Right lobe of liver (tissue), 6 donors: ENCODE measurements at regions of chr2 and their contacts with region 1.

Region 1: GRCh38 chr2:133171393-133172004 is 396.8 kb downstream of the NCKAP5 start:
- DNase-seq: no peak
- ATAC-seq: peak; percentile 78 to 91 (median 89)
- H3K4me3 ChIP-seq: no peak overlapping the region
- H3K27ac ChIP-seq: no peak overlapping the region
- H3K4me1 ChIP-seq: peaks cover 0 to 9% (median 0%) of the 10 kb centered on the region in 4 donors
- H3K27me3 ChIP-seq: no peaks in the 10 kb centered on the region
- CTCF ChIP-seq: peak; percentile 50 to 70 (median 65)
- POLR2A ChIP-seq: no peak

Region 2: GRCh38 chr2:132645722-132646535 is 525.6 kb before region 1 on chr2:
- intact Hi-C with region 1: loop called in 1 of 2 experiments (anchors 10 kb)
- DNase-seq: no peak
- ATAC-seq: peak in 1 of 4 donors; percentile 35
- H3K4me3 ChIP-seq: no peak overlapping the region
- H3K27ac ChIP-seq: no peak overlapping the region
- H3K4me1 ChIP-seq: peaks cover 0 to 21% (median 8%) of the 10 kb centered on the region in 4 donors
- H3K27me3 ChIP-seq: no peaks in the 10 kb centered on the region
- CTCF ChIP-seq: no peak
- POLR2A ChIP-seq: no peak